Dorsolateral prefrontal cortex (tissue), 120 donors: ENCODE measurements at regions of chr7 and their contacts with region 1.

Region 1: GRCh38 chr7:153090764-153091163 is 331.2 kb downstream of the ACTR3B start:
- DNase-seq: no peak
- H3K4me3 ChIP-seq: no peak overlapping the region
- H3K27ac ChIP-seq: no peak overlapping the region
- H3K27me3 ChIP-seq: peaks cover 0 to 4% (median 0%) of the 10 kb centered on the region in 45 donors
- CTCF ChIP-seq: peak in 21 of 56 donors; percentile 7 to 38 (median 17)

Region 2: GRCh38 chr7:152894273-152895170 is 196.2 kb before region 1 on chr7:
- intact Hi-C with region 1: loop called in 1 of 2 experiments (anchors 10 kb)
- DNase-seq: peak in 2 of 10 donors; percentile 23 to 64
- H3K4me3 ChIP-seq: peak overlapping the region in 45 of 59 donors; percentile 6 to 60 (median 31)
- H3K27ac ChIP-seq: no peak overlapping the region
- H3K27me3 ChIP-seq: no peaks in the 10 kb centered on the region
- CTCF ChIP-seq: peak; percentile 51 to 96 (median 82)

Region 3: DNA sequence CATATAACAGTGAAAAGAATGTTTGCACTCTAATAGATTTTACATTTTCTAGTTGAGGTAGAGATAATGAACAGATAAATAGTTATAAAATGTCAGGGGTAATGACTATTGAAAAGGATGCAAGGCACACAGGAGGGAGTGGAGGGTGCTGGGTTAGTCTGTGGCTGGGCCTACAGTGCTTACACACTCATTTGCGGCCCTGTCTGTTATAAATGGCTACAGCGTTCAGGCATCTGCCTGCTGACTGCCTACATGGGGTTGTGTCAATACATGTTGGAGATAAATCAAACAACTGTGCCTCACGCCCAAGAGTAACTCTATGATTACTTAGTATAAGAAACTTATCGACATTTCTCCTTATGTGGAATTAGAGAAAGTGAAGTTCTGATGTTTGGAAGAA is 18.0 kb before region 1 on chr7:
- intact Hi-C with region 1: no loop called
- DNase-seq: no peak
- H3K4me3 ChIP-seq: no peak overlapping the region
- H3K27ac ChIP-seq: no peak overlapping the region
- H3K27me3 ChIP-seq: no peaks in the 10 kb centered on the region
- CTCF ChIP-seq: no peak

Region 4: DNA sequence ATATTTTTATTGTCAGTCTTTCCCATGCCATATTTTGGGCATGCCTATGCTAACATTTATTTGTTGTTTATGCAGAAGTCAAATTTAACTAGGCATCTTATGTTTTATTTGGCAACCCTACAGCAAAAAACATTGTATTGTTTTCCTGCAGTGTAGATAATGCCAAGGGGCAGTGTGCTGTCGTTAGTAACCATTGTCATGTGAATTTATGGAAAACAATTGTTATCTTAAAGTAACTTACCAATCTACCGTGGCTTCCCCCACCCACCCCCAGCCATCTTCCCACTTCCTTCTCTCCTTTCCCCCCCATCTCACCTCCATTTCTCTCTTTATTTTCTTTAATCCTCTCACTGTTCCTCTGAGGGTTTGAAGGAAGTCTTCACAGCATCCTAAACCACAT is 39.3 kb after region 1 on chr7:
- intact Hi-C with region 1: no loop called
- DNase-seq: no peak
- H3K4me3 ChIP-seq: no peak overlapping the region
- H3K27ac ChIP-seq: no peak overlapping the region
- H3K27me3 ChIP-seq: peaks cover 0 to 6% (median 0%) of the 10 kb centered on the region in 45 donors
- CTCF ChIP-seq: no peak